OCI-LY7 (cell line): ENCODE measurements at regions of chr5 and their contacts with region 1.

Region 1: DNA sequence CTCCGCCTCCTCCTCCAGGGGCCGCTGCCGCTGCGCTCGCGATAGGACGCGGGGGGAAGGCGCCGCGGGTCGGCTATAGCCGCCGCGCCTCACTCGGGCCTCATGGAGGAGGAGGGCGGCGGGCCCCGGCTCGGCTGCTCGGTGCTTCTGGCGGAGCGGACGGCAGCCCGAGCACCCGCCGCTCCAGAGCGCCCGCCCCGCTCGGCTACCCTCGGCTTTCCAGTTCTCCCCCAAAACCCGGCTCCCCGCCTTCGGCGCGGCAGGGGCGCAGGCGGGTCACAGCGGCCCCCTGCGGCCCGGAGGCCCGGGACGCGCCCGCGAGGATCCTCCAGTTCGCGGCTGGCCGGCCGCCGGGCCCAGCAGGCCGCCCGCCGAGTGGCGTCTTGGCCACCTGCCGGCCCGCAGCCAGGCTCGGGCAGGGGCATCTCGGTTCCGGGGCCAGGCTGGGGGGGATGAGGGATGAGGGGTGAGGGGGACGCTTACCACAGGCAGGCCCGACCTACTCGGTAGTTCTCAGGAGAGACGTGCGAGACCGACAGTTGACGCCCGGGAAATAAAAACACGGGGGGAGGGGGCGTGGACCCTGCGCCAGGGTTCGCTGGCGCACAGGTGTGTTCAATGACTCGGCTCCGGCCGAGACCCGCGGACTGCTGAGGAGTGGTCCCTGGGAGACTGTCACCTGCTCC is at the start of gene PAIP1:
- DNase-seq: peak; percentile 89
- H3K4me3 ChIP-seq: peak within 1 kb of the TSS; percentile 75
- H3K27ac ChIP-seq: peak within 1 kb of the TSS; percentile 77
- H3K4me1 ChIP-seq: peaks cover 35% of the 10 kb centered on the region
- CTCF ChIP-seq: peak; percentile 80
- total RNA-seq, gene PAIP1: 52.8 and 69.2 TPM in 2 replicates

Region 2: DNA sequence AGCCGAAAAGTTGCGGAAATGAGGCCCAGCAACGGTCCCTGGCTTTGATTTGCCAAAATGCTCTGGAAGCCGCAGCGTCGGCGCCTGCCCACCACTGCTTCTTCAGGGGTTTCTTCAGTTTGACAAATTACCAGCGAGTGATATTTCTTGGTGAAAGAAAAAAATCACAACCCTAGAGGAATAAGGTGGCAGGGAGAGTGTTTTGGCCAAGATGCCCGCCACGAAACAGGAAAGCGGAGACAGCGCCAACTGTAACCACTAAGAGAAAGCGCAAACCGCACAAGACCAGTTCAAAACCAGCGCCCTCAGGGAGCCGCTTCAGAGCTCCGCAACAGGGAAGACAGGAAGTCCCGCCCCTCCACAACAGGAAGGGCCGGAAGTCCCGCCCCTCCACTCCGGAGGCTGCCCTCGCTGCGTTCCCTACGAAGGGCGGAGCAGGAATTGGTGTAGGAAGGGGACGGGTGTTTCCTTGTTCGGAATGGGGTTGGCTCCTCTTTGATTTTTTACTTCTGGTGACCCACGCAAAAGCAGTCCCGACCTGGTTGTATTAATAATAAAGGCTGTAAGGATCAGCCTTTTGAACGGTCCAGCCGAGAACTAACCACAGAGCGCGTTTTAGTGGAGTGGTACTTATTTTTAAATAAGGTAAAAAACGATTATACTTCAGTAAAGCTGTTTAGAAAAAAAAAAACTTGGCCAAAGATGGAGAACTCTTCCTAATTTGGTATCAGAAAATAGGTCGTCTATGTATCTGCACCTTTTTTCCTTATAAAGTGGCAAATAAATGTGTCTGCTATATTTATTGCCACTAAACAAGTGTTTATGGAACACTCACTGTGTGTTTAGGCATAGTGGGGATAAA is 42.0 kb before region 1 on chr5 and contains the start of gene C5orf34:
- CTCF ChIA-PET with region 1: no interaction called
- POLR2A ChIA-PET with region 1: interaction called, 3 read pairs
- intact Hi-C with region 1: loop called (anchors 1 kb)
- DNase-seq: peak; percentile 97
- H3K4me3 ChIP-seq: peak within 1 kb of the TSS; percentile 74
- H3K27ac ChIP-seq: peak within 1 kb of the TSS; percentile 86
- H3K4me1 ChIP-seq: peaks cover 17% of the 10 kb centered on the region
- CTCF ChIP-seq: peak; percentile 52
- total RNA-seq, gene C5orf34: 25.5 and 33.9 TPM in 2 replicates

Region 3: GRCh38 chr5:43543434-43543833 is 13.6 kb before region 1 on chr5:
- CTCF ChIA-PET with region 1: no interaction called
- POLR2A ChIA-PET with region 1: interaction called, 57 read pairs
- intact Hi-C with region 1: no loop called
- DNase-seq: no peak
- H3K4me3 ChIP-seq: no peak overlapping the region
- H3K27ac ChIP-seq: no peak overlapping the region
- H3K4me1 ChIP-seq: no peaks in the 10 kb centered on the region
- CTCF ChIP-seq: no peak